ENCODE measurements at regions of chr1 and their contacts with region 1.

Region 1: DNA sequence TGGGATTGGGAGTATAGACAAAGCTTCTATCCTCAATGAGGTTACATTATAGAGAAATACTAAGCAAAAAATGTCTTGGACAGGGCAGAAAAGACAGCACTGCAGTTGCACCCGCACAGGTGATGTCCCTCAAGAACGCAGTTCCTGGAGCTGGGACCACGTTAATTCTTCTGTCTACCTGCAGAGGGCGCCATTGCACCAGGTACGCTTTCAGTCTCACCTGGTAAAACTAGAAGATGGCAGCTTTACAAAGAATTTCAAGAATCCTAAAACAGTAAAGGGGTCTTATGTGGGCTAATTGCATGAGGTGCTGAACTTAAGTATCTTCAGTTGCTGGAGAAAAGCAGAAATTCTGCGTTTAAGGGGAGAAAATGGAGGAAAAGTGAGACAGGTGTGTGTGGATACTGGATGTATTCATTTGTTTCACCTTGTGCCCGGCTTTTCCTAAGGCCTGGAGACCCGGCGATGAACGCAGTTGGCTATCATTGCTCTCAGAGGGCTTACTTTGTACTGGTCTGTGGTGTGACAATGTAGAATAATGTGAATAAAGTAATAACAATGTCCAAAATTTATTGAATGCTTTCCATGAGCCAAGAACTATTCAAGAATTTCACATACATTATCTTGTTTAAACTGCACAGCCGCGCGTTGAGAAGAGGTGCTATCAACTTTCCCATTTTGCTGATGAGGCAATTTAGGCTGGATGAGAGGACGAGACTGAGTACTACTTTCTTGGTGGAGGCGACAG is 276.3 kb upstream of the GREM2 start:
- DNase-seq: peak; percentile 82
- H3K4me3 Mint-ChIP-seq: no peak overlapping the region
- H3K27ac Mint-ChIP-seq: no peak overlapping the region
- H3K4me1 Mint-ChIP-seq: no peaks in the 10 kb centered on the region
- H3K27me3 Mint-ChIP-seq: no peaks in the 10 kb centered on the region
- CTCF ChIP-seq: peak; percentile 95

Region 2: GRCh38 chr1:240813720-240814119 is 74.5 kb before region 1 on chr1:
- CTCF ChIA-PET with region 1: no interaction called
- intact Hi-C with region 1: no loop called
- DNase-seq: no peak
- H3K4me3 Mint-ChIP-seq: no peak overlapping the region
- H3K27ac Mint-ChIP-seq: no peak overlapping the region
- H3K4me1 Mint-ChIP-seq: no peaks in the 10 kb centered on the region
- H3K27me3 Mint-ChIP-seq: no peaks in the 10 kb centered on the region
- CTCF ChIP-seq: no peak

Region 3: DNA sequence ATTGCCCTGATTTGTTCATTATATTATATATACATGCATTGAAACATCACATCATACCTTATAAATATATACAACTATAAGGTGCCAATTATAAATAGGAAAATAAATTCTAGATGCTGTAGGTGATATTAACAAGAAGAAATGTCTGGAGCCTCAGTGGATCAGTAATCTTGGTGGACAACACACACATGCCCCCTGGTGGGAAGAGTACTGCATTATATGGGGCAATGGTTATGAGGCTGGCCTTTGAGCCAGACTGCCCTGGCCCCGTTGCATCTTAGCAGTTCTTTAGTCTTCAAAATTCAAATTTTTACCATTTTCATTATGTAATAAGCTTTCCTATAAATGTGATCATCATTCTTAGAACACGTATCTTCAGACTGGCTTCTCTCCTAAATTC is 58.7 kb after region 1 on chr1:
- CTCF ChIA-PET with region 1: no interaction called
- intact Hi-C with region 1: loop called (anchors 1 kb)
- DNase-seq: peak; percentile 73
- H3K4me3 Mint-ChIP-seq: no peak overlapping the region
- H3K27ac Mint-ChIP-seq: no peak overlapping the region
- H3K4me1 Mint-ChIP-seq: peaks cover 11% of the 10 kb centered on the region
- H3K27me3 Mint-ChIP-seq: no peaks in the 10 kb centered on the region
- CTCF ChIP-seq: peak; percentile 65

Region 4: DNA sequence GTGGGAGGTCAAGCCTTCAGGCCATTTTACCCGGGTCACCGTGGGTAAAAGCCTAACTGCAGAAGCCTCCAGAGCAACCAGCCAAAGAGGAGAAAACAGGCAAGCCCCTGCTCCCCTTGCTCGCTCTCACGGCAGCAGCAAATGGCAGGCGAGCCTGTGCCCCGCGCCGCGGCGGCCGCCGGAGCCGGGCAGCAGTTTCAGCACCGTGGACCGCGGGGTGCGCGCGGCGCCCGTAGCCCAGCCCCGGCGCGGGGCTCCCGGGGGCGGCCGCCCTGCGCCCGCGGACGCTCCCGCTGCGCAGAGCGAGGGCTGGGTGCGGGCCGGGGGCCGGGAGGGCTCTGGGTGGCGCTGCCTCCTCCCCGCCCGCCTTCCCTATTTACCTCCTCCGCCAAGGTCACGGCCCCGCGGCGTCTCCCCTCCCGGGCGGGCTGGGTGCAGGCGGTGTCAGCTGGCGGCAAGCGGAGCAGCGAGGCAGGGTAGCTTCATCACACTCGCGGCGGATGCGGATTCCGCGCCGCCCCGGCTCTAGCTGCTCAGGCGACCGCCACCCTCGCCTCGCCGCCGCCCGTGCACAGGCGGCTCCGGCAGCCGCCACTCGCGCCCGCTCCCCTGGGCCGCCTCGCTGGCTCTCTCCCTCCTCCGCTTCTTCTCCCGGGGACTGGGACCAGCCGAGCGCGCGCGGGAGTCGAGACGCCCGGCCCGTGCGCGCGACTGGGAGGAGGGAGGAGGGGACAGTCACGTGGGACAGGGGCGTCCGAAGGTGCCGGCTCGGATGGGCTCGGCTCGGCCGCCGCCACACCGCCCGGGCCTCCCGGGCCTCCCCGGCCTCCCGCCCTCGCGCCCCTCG is 468.5 kb after region 1 on chr1 and contains the start of gene RGS7:
- CTCF ChIA-PET with region 1: no interaction called
- intact Hi-C with region 1: no loop called
- DNase-seq: peak; percentile 81
- H3K4me3 Mint-ChIP-seq: peak within 1 kb of the TSS; percentile 67
- H3K27ac Mint-ChIP-seq: no peak within 1 kb of the TSS
- H3K4me1 Mint-ChIP-seq: no peaks in the 10 kb centered on the region
- H3K27me3 Mint-ChIP-seq: peaks cover 14% of the 10 kb centered on the region
- CTCF ChIP-seq: no peak
- total RNA-seq, gene RGS7: 1.0 and 1.3 TPM in 2 replicates

Region 5: GRCh38 chr1:241408170-241408569 is 520.0 kb after region 1 on chr1:
- CTCF ChIA-PET with region 1: no interaction called
- intact Hi-C with region 1: loop called (anchors 1 kb)
- DNase-seq: peak; percentile 18
- H3K4me3 Mint-ChIP-seq: no peak overlapping the region
- H3K27ac Mint-ChIP-seq: no peak overlapping the region
- H3K4me1 Mint-ChIP-seq: no peaks in the 10 kb centered on the region
- H3K27me3 Mint-ChIP-seq: peaks cover 14% of the 10 kb centered on the region
- CTCF ChIP-seq: peak; percentile 17

Region 6: GRCh38 chr1:241485554-241485992 is 597.4 kb after region 1 on chr1:
- CTCF ChIA-PET with region 1: interaction called, 14 read pairs
- intact Hi-C with region 1: loop called (anchors 1 kb)
- DNase-seq: peak; percentile 21
- H3K4me3 Mint-ChIP-seq: no peak overlapping the region
- H3K27ac Mint-ChIP-seq: no peak overlapping the region
- H3K4me1 Mint-ChIP-seq: peaks cover 25% of the 10 kb centered on the region
- H3K27me3 Mint-ChIP-seq: no peaks in the 10 kb centered on the region
- CTCF ChIP-seq: peak; percentile 73

Region 7: GRCh38 chr1:241499910-241500309 is 611.7 kb after region 1 on chr1:
- CTCF ChIA-PET with region 1: no interaction called
- intact Hi-C with region 1: loop called (anchors 1 kb)
- DNase-seq: peak; percentile 28
- H3K4me3 Mint-ChIP-seq: no peak overlapping the region
- H3K27ac Mint-ChIP-seq: no peak overlapping the region
- H3K4me1 Mint-ChIP-seq: no peaks in the 10 kb centered on the region
- H3K27me3 Mint-ChIP-seq: no peaks in the 10 kb centered on the region
- CTCF ChIP-seq: no peak